B cell (primary cell): ENCODE measurements at regions of chr11 and their contacts with region 1.

Region 1: DNA sequence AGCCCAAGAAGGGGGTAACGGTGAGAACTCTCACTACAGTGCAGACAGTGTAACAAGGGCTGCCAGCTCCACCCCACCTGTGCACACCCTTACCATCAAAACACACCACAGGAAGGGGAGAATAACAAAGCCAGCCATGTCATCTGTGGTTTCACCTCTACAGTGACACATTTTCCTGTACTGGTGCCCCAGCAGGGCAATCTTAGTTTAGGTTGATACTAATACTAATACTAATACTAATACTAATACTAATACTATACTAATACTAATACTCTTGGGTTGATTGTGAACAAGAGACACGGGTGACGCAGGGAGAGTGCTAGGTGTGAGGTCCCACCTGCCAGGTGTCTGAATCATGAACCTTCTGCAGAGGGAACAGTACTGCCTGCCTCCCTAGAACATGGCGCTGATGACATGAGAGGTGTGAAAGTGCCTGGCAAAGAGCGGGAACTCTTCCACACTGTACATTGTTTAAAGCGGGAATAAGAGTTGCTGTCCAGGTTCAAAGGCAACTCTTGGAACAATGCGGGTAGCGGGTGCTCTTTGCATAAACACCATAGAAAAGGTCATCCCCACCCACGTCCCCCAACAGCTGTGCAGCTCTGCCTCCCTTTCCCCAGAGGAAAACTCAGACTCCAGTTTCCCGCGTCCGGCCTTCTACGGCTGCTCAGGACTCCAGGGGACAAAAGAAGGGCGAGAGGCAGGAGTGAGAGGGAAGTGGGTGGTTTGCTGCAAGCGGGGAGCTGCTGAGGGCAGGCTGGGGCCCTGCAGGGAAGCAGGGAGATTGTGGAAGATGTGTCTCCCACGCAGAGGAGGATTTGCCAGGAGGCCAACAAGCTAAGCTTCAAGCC is 25.0 kb upstream of the TMPRSS4 start:
- DNase-seq: peak; percentile 38
- ATAC-seq: peak; percentile 87
- H3K4me3 ChIP-seq: no peak overlapping the region
- H3K4me3 Mint-ChIP-seq: peak overlapping the region; percentile 42
- H3K27ac ChIP-seq: peak overlapping the region in 1 of 2 donors; percentile 35
- H3K27ac Mint-ChIP-seq: peak overlapping the region; percentile 88
- H3K4me1 ChIP-seq: peaks cover 32 to 34% of the 10 kb centered on the region in 2 donors
- H3K4me1 Mint-ChIP-seq: peaks cover 39% of the 10 kb centered on the region
- H3K27me3 ChIP-seq: no peaks in the 10 kb centered on the region
- H3K27me3 Mint-ChIP-seq: peaks cover 8% of the 10 kb centered on the region
- CTCF ChIP-seq: no peak

Region 2: GRCh38 chr11:117817368-117818040 is 234.3 kb before region 1 on chr11:
- CTCF ChIA-PET with region 1: interaction called, 136 read pairs
- POLR2A ChIA-PET with region 1: interaction called, 3 read pairs
- intact Hi-C with region 1: loop called (anchors 1 kb)
- DNase-seq: peak; percentile 89
- ATAC-seq: peak; percentile 11
- H3K4me3 ChIP-seq: peak overlapping the region in 4 of 5 experiments; percentile 2 to 62 (median 50)
- H3K4me3 Mint-ChIP-seq: peak overlapping the region; percentile 89
- H3K27ac ChIP-seq: peak overlapping the region in 1 of 2 donors; percentile 91
- H3K27ac Mint-ChIP-seq: peak overlapping the region; percentile 93
- H3K4me1 ChIP-seq: peaks cover 46 to 58% of the 10 kb centered on the region in 2 donors
- H3K4me1 Mint-ChIP-seq: peaks cover 55% of the 10 kb centered on the region
- H3K27me3 ChIP-seq: peaks cover 0 to 11% (median 2%) of the 10 kb centered on the region in 4 experiments
- H3K27me3 Mint-ChIP-seq: peaks cover 10% of the 10 kb centered on the region
- CTCF ChIP-seq: peak; percentile 98

Region 3: DNA sequence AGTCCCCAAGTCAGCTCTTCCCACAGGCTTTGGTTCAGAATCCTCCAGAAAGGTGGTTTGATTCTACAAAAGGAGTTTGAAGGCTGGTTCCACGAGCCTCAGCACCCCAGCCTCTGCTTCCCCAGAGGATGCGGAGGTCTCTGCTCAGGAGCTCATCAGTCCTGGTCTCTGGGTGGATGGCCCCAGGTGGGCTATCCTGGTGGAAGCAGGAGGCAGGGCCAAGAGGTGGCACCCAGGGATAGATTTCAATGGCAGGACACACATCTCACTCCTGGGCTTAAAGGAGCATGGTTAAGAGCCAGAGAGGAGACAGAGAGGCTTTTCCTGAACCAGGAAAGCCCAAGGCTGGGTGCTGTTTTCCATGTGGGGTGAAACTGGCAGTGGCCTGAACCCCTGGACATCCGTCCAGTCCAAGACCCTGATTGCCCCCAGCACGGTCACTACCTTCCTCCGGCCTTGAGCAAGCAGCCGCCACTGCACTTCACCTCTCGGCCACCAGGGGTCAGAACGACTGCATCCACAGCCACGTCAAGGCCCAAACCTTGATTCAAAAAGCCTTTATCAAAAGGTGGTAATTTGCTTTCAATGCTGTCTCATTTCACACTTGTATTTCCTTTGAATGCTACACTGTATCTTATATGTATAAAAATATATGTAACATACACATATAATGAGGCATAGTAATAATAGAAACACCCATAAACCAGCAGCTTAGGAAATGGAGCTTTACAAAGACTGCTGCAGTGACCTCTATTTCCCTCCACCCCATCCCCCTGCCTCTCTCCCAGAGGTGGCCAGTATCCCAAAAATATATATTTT is 208.0 kb before region 1 on chr11:
- CTCF ChIA-PET with region 1: interaction called, 227 read pairs
- POLR2A ChIA-PET with region 1: interaction called, 3 read pairs
- intact Hi-C with region 1: loop called (anchors 1 kb)
- DNase-seq: peak; percentile 84
- ATAC-seq: peak; percentile 93
- H3K4me3 ChIP-seq: no peak overlapping the region
- H3K4me3 Mint-ChIP-seq: no peak overlapping the region
- H3K27ac ChIP-seq: no peak overlapping the region
- H3K27ac Mint-ChIP-seq: no peak overlapping the region
- H3K4me1 ChIP-seq: peaks cover 0 to 3% of the 10 kb centered on the region in 2 donors
- H3K4me1 Mint-ChIP-seq: no peaks in the 10 kb centered on the region
- H3K27me3 ChIP-seq: no peaks in the 10 kb centered on the region
- H3K27me3 Mint-ChIP-seq: peaks cover 5% of the 10 kb centered on the region
- CTCF ChIP-seq: peak; percentile 99

Region 4: DNA sequence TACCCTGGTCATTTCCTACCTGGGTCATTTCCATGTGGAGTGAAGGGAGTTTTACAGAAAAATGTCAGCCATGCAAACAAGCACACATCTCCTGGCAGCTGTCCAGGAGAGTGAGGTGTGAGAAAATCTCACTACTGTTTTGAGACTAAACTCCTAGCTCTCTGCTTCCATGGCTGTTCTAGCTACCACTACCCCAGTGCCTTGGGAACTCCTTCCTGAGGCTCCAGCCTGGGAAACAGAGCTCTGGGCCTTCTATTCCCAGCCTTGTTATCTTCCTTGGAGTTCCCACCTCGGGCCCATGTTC is 119.8 kb before region 1 on chr11:
- CTCF ChIA-PET with region 1: interaction called, 14 read pairs
- POLR2A ChIA-PET with region 1: no interaction called
- intact Hi-C with region 1: no loop called
- DNase-seq: no peak
- ATAC-seq: no peak
- H3K4me3 ChIP-seq: no peak overlapping the region
- H3K4me3 Mint-ChIP-seq: no peak overlapping the region
- H3K27ac ChIP-seq: no peak overlapping the region
- H3K27ac Mint-ChIP-seq: no peak overlapping the region
- H3K4me1 ChIP-seq: peaks cover 11 to 20% of the 10 kb centered on the region in 2 donors
- H3K4me1 Mint-ChIP-seq: peaks cover 16% of the 10 kb centered on the region
- H3K27me3 ChIP-seq: no peaks in the 10 kb centered on the region
- H3K27me3 Mint-ChIP-seq: peaks cover 9% of the 10 kb centered on the region
- CTCF ChIP-seq: no peak

Region 5: GRCh38 chr11:117985953-117986887 is 65.6 kb before region 1 on chr11 and contains the start of gene IL10RA:
- CTCF ChIA-PET with region 1: interaction called, 72 read pairs
- POLR2A ChIA-PET with region 1: interaction called, 23 read pairs
- intact Hi-C with region 1: loop called (anchors 1 kb)
- DNase-seq: peak; percentile 92
- ATAC-seq: peak; percentile 92
- H3K4me3 ChIP-seq: peak within 1 kb of the TSS; percentile 82 to 99 (median 98)
- H3K4me3 Mint-ChIP-seq: peak within 1 kb of the TSS; percentile 92
- H3K27ac ChIP-seq: peak within 1 kb of the TSS; percentile 93 to 94
- H3K27ac Mint-ChIP-seq: peak within 1 kb of the TSS; percentile 94
- H3K4me1 ChIP-seq: peaks cover 54 to 75% of the 10 kb centered on the region in 2 donors
- H3K4me1 Mint-ChIP-seq: peaks cover 76% of the 10 kb centered on the region
- H3K27me3 ChIP-seq: no peaks in the 10 kb centered on the region
- H3K27me3 Mint-ChIP-seq: no peaks in the 10 kb centered on the region
- CTCF ChIP-seq: no peak
- total RNA-seq, gene IL10RA: 417 and 434 TPM in 2 replicates

Region 6: GRCh38 chr11:118021146-118021545 is 30.7 kb before region 1 on chr11:
- CTCF ChIA-PET with region 1: interaction called, 34 read pairs
- POLR2A ChIA-PET with region 1: interaction called, 3 read pairs
- intact Hi-C with region 1: no loop called
- DNase-seq: no peak
- ATAC-seq: no peak
- H3K4me3 ChIP-seq: no peak overlapping the region
- H3K4me3 Mint-ChIP-seq: no peak overlapping the region
- H3K27ac ChIP-seq: no peak overlapping the region
- H3K27ac Mint-ChIP-seq: no peak overlapping the region
- H3K4me1 ChIP-seq: peaks cover 12 to 18% of the 10 kb centered on the region in 2 donors
- H3K4me1 Mint-ChIP-seq: peaks cover 22% of the 10 kb centered on the region
- H3K27me3 ChIP-seq: no peaks in the 10 kb centered on the region
- H3K27me3 Mint-ChIP-seq: no peaks in the 10 kb centered on the region
- CTCF ChIP-seq: no peak